Activated naive CD4-positive, alpha-beta T cell treated with anti-CD3 and anti-CD28 coated beads for 36 hours (primary cell): ENCODE measurements at regions of chr17 and their contacts with region 1.

Region 1: DNA sequence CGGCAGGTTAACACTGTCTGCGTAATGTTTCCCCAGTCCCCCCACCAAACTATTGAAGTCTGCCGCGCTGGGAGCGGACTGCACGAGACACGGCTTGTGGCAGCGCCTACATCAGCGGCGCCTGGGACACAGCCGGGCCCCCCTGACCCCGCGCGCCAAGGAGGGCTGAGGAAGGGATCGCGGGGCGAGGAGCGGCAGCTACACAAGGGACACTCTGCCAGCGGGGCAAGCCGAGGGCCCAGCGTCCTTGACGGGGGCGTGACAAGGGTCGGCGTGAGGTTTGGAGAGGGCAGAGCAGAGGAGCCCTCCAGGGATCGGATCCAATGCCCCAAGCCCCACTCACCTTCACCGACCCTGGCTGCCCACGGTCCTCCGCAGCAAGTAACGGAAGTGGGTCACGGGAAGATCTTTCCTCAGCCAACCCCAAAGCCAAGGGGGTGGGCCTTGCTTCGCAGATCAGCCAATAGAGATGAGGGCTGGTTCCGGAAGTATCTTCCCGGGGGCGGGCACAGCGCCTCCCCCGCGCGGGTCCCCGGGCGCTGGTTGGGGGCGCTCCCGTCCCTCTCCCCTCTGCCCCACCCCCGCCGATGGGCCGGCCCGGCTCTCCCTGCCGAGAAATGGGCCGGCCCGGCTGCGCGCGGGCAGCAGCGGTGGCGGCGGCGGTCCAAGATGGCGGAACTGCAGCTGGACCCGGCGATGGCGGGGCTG is at the starts of genes ATP5PD and KCTD2:
- DNase-seq: peak; percentile 97
- H3K4me3 Mint-ChIP-seq: peak within 1 kb of the TSS; percentile 97
- H3K27ac Mint-ChIP-seq: peak within 1 kb of the TSS; percentile 89
- H3K4me1 Mint-ChIP-seq: peaks cover 47% of the 10 kb centered on the region
- H3K27me3 Mint-ChIP-seq: no peaks in the 10 kb centered on the region
- total RNA-seq, gene ATP5PD: 227 to 249 TPM
- total RNA-seq, gene KCTD2: 18.7 to 20.8 TPM

Region 2: DNA sequence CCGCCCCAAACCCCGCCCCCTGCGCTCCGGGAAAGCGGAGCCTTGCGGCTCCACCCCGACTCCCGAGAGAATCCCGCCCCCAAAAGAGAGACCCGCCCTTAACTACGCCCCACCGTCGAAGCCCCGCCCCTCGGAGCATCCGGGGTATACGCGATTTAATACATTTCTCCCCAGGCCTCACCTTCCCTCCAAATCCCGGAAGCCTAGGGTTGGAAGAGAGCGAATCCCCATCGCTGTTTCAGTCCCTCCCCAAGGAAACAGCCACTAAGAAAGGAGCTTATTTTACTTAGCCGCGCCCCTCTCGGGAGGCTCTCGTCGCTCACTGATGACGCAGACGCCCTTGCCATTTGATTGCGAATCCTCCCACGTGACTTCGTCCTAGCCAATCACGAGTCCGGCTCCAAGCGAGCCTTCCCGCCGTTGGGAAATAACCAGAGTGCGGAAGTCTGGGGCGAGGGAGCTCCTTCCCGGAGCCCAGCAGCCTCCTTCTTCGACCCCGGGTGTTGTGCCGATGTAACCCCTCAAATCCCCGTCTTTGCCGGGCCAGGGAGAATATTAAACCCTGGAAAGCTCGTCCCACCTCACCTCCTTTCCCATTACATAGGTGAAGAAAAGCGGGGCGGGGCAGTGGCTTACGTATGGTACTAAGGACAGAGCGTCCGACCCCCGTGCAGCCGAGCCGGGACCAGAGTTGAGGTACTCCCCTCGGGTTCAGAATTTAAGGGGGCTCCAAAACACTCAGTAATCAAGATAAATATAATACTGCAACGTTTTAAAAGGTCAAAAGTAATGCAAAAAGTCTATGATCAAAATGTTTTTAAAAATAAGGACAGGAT is 173.5 kb before region 1 on chr17:
- CTCF ChIA-PET with region 1: no interaction called
- intact Hi-C with region 1: loop called (anchors 5 kb)
- DNase-seq: peak; percentile 100
- H3K4me3 Mint-ChIP-seq: peak overlapping the region; percentile 88
- H3K27ac Mint-ChIP-seq: peak overlapping the region; percentile 91
- H3K4me1 Mint-ChIP-seq: peaks cover 27% of the 10 kb centered on the region
- H3K27me3 Mint-ChIP-seq: no peaks in the 10 kb centered on the region

Region 3: GRCh38 chr17:75001915-75002843 is 44.6 kb before region 1 on chr17:
- CTCF ChIA-PET with region 1: no interaction called
- intact Hi-C with region 1: no loop called
- DNase-seq: no peak
- H3K4me3 Mint-ChIP-seq: no peak overlapping the region
- H3K27ac Mint-ChIP-seq: no peak overlapping the region
- H3K4me1 Mint-ChIP-seq: peaks cover 2% of the 10 kb centered on the region
- H3K27me3 Mint-ChIP-seq: no peaks in the 10 kb centered on the region

Region 4: GRCh38 chr17:75012346-75013091 is 34.2 kb before region 1 on chr17 and contains the start of gene MRPL58:
- CTCF ChIA-PET with region 1: no interaction called
- intact Hi-C with region 1: loop called (anchors 2 kb)
- DNase-seq: peak; percentile 86
- H3K4me3 Mint-ChIP-seq: peak within 1 kb of the TSS; percentile 91
- H3K27ac Mint-ChIP-seq: peak within 1 kb of the TSS; percentile 81
- H3K4me1 Mint-ChIP-seq: peaks cover 35% of the 10 kb centered on the region
- H3K27me3 Mint-ChIP-seq: no peaks in the 10 kb centered on the region
- total RNA-seq, gene MRPL58: 60.6 to 64.5 TPM

Region 5: DNA sequence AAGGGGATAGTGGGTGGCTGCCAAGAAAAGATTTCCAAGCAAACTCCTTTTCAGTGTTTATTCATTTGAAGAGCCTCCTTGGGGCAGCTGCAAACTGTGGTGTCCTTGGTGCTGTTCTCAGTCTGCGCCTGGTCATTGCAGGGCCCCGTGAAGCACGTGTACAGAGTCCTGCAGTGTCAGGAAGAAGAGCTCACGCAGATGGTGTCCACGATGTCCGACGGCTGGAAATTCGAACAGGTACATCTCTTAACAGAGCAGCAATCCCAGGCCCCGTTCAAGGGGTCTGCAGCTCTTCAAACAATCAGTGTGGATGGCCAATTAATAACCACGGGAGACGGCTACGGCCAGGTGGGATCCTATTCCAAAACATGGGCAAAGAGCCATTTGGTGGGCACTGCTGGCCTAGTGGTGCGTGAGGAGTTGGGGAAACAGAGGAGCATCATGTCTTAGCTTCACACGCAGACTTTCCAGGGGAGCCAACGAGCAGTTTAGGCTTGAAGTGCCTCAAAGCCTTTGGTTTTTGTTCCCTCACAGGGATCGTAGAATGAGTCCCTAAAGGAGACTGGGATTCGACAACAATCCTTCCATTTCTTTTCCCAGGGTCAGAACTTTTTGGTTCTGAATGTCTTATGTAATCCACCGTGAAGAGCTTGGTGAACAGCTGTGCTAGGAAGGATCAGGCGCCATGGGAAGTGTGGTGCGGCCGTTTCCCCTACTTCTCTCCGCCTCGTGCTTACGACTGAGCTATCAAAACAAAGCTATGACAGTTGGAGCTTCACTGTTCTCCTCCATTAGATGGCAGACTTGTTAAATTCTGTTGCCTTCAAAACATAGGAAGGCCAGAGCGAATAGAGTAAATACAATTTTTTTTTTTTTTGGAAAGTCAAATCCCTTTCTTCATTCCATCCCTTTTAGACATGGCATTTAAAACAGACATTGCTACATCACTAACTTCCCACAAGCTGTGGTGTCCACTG is 12.9 kb after region 1 on chr17:
- CTCF ChIA-PET with region 1: interaction called, 17 read pairs
- intact Hi-C with region 1: no loop called
- DNase-seq: no peak
- H3K4me3 Mint-ChIP-seq: no peak overlapping the region
- H3K27ac Mint-ChIP-seq: no peak overlapping the region
- H3K4me1 Mint-ChIP-seq: peaks cover 19% of the 10 kb centered on the region
- H3K27me3 Mint-ChIP-seq: no peaks in the 10 kb centered on the region

Region 6: DNA sequence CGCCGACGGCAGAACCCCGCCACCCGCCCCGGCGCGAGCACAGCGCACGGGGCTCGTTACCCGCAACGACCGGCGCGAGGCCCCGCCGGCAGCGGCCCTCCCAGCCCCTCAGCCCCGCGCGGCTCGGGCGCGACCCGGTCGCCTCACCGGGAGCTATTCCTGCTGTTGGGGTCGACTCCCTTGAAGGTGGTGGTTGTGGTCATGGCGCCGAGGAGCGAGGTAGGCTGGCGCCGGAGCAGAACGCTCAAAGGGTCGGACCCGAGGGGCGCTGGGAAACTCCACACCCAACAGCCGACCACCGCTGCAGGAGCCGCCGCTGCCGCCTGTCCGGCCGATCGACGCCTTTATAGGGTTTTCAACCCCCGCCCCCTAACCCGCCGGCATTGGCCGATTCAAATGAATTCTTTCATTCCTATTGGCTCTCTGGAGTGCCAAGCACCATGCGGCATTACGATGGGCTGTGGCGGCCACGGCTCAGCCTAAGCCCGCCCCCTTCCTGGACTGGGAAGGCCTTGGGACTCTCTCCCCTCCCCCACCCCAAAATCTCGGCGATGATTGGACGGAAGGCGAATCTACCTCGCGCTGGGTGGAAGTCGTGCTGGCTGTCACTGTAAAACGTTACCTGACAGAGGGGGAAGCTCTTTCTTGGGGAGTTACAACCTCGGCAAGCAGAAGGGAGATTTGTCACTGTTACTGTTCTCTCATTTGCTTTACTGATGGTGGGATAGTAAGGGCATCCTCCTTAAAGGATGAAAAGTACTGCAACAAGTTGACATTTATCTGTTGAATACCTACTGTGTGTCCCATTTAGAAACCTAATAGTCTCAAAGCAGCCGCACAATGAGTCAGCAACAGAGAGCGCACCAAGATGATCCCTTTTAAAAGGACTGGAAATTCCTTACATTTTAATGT is 107.7 kb after region 1 on chr17 and contains the start of gene JPT1:
- CTCF ChIA-PET with region 1: no interaction called
- intact Hi-C with region 1: loop called (anchors 1 kb)
- DNase-seq: peak; percentile 100
- H3K4me3 Mint-ChIP-seq: peak within 1 kb of the TSS; percentile 94
- H3K27ac Mint-ChIP-seq: peak within 1 kb of the TSS; percentile 78
- H3K4me1 Mint-ChIP-seq: peaks cover 30% of the 10 kb centered on the region
- H3K27me3 Mint-ChIP-seq: no peaks in the 10 kb centered on the region
- total RNA-seq, gene JPT1: 242 to 258 TPM